Activated CD4-positive, alpha-beta T cell treated with anti-CD3 and anti-CD28 coated beads for 36 hours (primary cell): ENCODE measurements at regions of chr5 and their contacts with region 1.

Region 1: DNA sequence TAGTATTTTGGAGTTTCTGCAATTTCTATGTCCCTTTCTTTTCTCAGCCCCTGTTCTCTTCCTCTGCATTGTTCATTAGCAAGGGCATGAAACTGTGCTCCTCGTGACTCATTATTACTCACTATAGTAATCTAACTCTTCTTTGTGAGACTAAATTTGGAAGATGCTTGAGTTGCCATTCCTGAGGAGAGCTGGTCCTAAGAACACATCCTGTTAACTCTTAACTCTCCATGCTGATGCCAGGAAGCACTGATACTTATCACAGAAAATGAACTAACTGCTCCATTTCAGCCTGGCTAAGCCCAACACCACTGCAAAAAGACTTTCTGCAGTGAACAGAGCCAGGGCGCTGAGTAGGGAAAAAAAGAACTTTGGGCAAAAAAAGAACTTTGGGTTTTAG is 10.6 kb upstream of the CSNK1A1 start:
- DNase-seq: peak; percentile 8
- ATAC-seq: peak; percentile 91
- H3K4me3 Mint-ChIP-seq: no peak overlapping the region
- H3K27ac Mint-ChIP-seq: peak overlapping the region; percentile 74
- H3K4me1 Mint-ChIP-seq: peaks cover 30% of the 10 kb centered on the region
- H3K27me3 Mint-ChIP-seq: no peaks in the 10 kb centered on the region

Region 2: DNA sequence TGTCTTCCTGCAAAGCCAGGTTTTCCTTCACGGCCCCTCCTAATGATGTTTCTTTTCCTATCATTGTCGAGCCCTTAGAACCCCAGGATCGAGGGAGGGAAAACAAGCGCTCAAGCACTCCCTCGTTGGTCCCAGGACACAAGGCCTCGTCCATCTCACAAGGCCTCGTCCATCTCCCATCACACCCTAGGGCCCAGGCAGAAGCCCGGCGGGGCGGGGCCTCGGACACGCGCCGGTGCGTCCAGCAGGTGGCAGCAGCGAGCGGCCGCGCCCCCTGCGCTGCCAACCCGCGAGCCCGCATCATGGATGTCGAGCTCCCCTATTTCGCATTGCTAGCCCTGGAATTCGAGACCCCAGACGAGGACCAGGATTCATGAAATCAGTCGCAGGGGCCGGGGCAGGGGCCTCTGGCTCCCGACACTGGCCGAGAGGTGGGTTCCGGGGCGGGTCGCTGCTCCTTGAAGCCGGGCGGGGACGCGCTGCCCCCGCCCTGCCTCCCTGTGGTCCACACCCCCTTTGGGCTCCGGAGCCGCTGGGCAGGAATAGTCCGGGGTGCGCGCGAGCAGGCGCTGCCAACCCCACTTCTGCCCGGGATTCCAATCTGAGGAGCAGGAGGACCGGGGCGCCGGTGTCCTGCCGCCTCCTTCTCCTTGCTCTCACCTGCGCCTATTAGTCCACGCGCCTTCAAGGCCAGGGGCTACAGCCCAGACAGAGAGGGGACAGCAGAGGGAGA is 420.5 kb before region 1 on chr5 and contains the start of gene ABLIM3:
- CTCF ChIA-PET with region 1: interaction called, 3 read pairs
- POLR2A ChIA-PET with region 1: no interaction called
- intact Hi-C with region 1: loop called in 1 of 2 experiments (anchors 10 kb)
- DNase-seq: peak; percentile 83
- ATAC-seq: peak; percentile 96
- H3K4me3 Mint-ChIP-seq: peak within 1 kb of the TSS; percentile 29
- H3K27ac Mint-ChIP-seq: no peak within 1 kb of the TSS
- H3K4me1 Mint-ChIP-seq: no peaks in the 10 kb centered on the region
- H3K27me3 Mint-ChIP-seq: peaks cover 5% of the 10 kb centered on the region
- total RNA-seq, gene ABLIM3: 0.07 TPM in 1 of 2 experiments, not detected in the other

Region 3: DNA sequence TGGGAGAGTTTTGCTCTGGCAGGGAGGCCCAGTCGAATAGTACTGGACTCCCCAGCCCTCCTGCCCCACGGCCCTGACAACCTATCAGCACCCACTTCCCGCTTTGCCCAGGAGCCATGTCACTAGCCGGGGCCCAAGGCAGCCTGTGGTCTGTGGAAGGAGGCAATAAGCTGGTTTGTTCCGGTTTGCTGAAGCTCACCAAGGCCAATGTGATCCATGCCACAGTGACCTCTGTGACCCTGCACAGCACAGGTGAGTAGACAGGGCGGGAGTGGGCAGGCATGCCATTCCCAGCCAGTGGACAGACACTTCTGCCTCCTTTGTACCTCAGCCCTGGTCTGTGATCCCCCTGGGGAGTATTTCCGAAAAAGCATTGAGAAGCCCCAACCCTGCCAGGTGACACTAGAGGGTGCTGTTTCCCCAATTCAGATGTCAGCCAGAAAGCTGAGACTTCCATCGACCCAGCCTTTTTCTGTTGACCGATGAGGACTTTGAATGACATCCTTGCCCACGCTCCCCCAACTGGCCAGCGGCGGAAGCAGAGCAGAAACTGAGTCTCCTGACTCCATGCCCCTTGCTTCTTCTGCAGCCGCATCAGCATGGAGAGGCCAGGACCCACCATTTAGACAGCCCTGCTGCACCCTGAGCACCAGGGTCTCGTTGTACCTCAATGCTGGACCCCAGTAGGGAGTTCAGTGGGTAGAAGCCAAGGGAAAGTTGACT is 194.4 kb before region 1 on chr5:
- CTCF ChIA-PET with region 1: interaction called, 15 read pairs
- POLR2A ChIA-PET with region 1: no interaction called
- intact Hi-C with region 1: loop called in 1 of 2 experiments (anchors 5 kb)
- DNase-seq: peak; percentile 71
- ATAC-seq: peak; percentile 65
- H3K4me3 Mint-ChIP-seq: no peak overlapping the region
- H3K27ac Mint-ChIP-seq: no peak overlapping the region
- H3K4me1 Mint-ChIP-seq: peaks cover 7% of the 10 kb centered on the region
- H3K27me3 Mint-ChIP-seq: no peaks in the 10 kb centered on the region

Region 4: GRCh38 chr5:149381987-149382340 is 179.9 kb before region 1 on chr5:
- CTCF ChIA-PET with region 1: interaction called, 23 read pairs
- POLR2A ChIA-PET with region 1: no interaction called
- intact Hi-C with region 1: loop called (anchors 1 kb)
- DNase-seq: peak; percentile 87
- ATAC-seq: peak; percentile 97
- H3K4me3 Mint-ChIP-seq: no peak overlapping the region
- H3K27ac Mint-ChIP-seq: no peak overlapping the region
- H3K4me1 Mint-ChIP-seq: no peaks in the 10 kb centered on the region
- H3K27me3 Mint-ChIP-seq: no peaks in the 10 kb centered on the region

Region 5: GRCh38 chr5:149442563-149443182 is 119.2 kb before region 1 on chr5:
- CTCF ChIA-PET with region 1: interaction called, 22 read pairs
- POLR2A ChIA-PET with region 1: interaction called, 7 read pairs
- intact Hi-C with region 1: loop called (anchors 1 kb)
- DNase-seq: peak; percentile 88
- ATAC-seq: peak; percentile 85
- H3K4me3 Mint-ChIP-seq: no peak overlapping the region
- H3K27ac Mint-ChIP-seq: no peak overlapping the region
- H3K4me1 Mint-ChIP-seq: peaks cover 22% of the 10 kb centered on the region
- H3K27me3 Mint-ChIP-seq: no peaks in the 10 kb centered on the region

Region 6: GRCh38 chr5:149551200-149552037 is 10.4 kb before region 1 on chr5 and contains the start of gene CSNK1A1:
- CTCF ChIA-PET with region 1: interaction called, 20 read pairs
- POLR2A ChIA-PET with region 1: interaction called, 31 read pairs
- intact Hi-C with region 1: no loop called
- DNase-seq: peak; percentile 100
- ATAC-seq: peak; percentile 90
- H3K4me3 Mint-ChIP-seq: peak within 1 kb of the TSS; percentile 95
- H3K27ac Mint-ChIP-seq: peak within 1 kb of the TSS; percentile 100
- H3K4me1 Mint-ChIP-seq: peaks cover 27% of the 10 kb centered on the region
- H3K27me3 Mint-ChIP-seq: no peaks in the 10 kb centered on the region
- total RNA-seq, gene CSNK1A1: 169 to 203 TPM

Region 7: DNA sequence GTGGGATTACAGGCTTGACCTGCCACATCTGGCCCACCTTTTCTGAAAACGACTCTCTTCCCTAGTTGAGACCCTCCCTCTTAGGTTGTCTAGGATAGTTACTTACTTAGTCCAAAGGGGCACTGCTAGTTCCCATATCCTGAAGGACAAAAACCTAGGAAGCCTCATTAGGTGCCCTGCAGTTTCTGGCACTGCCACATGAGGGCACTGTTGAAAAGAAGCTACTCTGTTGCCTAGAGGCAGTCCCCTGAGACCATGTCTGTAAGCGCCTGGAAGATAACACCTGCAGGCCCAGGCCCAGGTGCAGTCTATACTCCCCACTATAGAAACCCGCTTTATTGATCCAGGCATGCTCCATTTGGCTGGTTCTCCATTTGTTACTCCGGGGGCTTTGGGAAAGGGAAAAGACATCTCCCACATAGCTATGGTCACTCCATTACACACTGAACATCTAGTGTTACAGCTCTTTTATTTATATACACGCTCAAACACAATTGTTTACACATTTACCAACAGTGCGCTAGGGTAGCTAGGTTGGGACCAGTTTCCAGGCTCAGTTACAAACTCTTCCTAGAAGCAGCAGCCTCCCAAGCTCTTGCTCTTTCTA is 94.8 kb after region 1 on chr5:
- CTCF ChIA-PET with region 1: no interaction called
- POLR2A ChIA-PET with region 1: no interaction called
- intact Hi-C with region 1: no loop called
- DNase-seq: peak; percentile 42
- ATAC-seq: no peak
- H3K4me3 Mint-ChIP-seq: no peak overlapping the region
- H3K27ac Mint-ChIP-seq: no peak overlapping the region
- H3K4me1 Mint-ChIP-seq: no peaks in the 10 kb centered on the region
- H3K27me3 Mint-ChIP-seq: peaks cover 7% of the 10 kb centered on the region